ENCODE measurements at regions of chr21 and their contacts with region 1.

Region 1: GRCh38 chr21:32727687-32728455 is at the start of gene SYNJ1:
- DNase-seq: peak; percentile 95 to 97
- ATAC-seq: peak; percentile 98 to 99 (median 99)
- H3K4me3 ChIP-seq: peak within 1 kb of the TSS; percentile 75 to 94 (median 89)
- H3K27ac ChIP-seq: peak within 1 kb of the TSS; percentile 67 to 97 (median 92)
- H3K4me1 ChIP-seq: peaks cover 0 to 41% (median 19%) of the 10 kb centered on the region in 9 donors
- H3K27me3 ChIP-seq: no peaks in the 10 kb centered on the region
- CTCF ChIP-seq: no peak
- total RNA-seq, gene SYNJ1: 8.8 to 15.6 (median 12.6) TPM

Region 2: GRCh38 chr21:32392880-32393676 is 334.8 kb before region 1 on chr21 and contains the start of gene URB1:
- intact Hi-C with region 1: loop called in 1 of 10 experiments (anchors 5 kb)
- DNase-seq: peak; percentile 94 to 97
- ATAC-seq: peak; percentile 98 to 99 (median 99)
- H3K4me3 ChIP-seq: peak within 1 kb of the TSS; percentile 71 to 98 (median 88)
- H3K27ac ChIP-seq: peak within 1 kb of the TSS; percentile 63 to 95 (median 88)
- H3K4me1 ChIP-seq: peaks cover 0 to 45% (median 38%) of the 10 kb centered on the region in 9 donors
- H3K27me3 ChIP-seq: no peaks in the 10 kb centered on the region
- CTCF ChIP-seq: peak in 2 of 9 donors; percentile 21 to 28
- total RNA-seq, gene URB1: 7.3 to 17.7 (median 13.2) TPM

Region 3: DNA sequence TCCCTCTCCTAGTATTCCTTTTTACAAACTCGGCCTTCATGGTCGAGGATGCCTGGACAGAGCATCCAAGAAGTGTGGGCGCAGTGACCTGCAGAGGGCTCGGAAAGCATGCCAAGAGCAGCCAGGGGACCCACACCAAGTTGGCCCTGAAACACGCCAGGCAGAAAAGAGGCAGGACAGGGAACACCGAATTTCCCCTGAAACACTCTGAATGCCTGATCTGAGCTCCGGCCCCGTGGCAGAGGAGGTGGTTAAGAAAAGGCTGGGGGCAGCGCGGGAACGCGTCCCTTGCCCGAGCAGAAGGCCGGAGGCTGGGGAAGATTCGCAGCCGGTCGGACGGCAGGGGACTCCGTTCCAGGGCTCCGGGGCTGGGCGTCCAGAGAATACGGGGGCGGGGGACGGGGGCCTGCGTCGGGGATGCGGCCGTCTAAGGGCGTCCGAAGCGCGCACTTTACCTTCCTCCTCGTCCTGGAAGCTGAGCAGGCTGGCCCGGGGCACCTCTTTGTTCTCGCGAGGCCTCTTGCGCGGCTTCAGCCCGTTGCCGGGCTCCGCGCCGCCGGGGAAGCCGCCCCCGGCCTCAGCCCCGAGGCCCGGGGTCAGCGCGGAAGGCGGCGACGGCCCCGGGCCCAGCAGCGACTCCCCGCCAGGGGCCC is 43.1 kb after region 1 on chr21:
- intact Hi-C with region 1: loop called in 3 of 10 experiments (anchors 5 kb)
- DNase-seq: peak; percentile 51 to 63
- ATAC-seq: peak; percentile 28 to 77 (median 52)
- H3K4me3 ChIP-seq: peak overlapping the region; percentile 64 to 93 (median 79)
- H3K27ac ChIP-seq: peak overlapping the region; percentile 85 to 95 (median 90)
- H3K4me1 ChIP-seq: peaks cover 0 to 46% (median 35%) of the 10 kb centered on the region in 9 donors
- H3K27me3 ChIP-seq: no peaks in the 10 kb centered on the region
- CTCF ChIP-seq: no peak

Region 4: GRCh38 chr21:33089398-33090119 is 361.7 kb after region 1 on chr21:
- intact Hi-C with region 1: no loop called
- DNase-seq: no peak
- ATAC-seq: no peak
- H3K4me3 ChIP-seq: no peak overlapping the region
- H3K27ac ChIP-seq: no peak overlapping the region
- H3K4me1 ChIP-seq: peaks cover 0 to 11% (median 0%) of the 10 kb centered on the region in 9 donors
- H3K27me3 ChIP-seq: peaks cover 0 to 63% (median 27%) of the 10 kb centered on the region in 7 donors
- CTCF ChIP-seq: no peak

Measured in heart right ventricle (tissue), 16 donors.